Activated B cell treated with CpG ODN at 0.5 μM for 24 hours (primary cell): ENCODE measurements at regions of chr12 and their contacts with region 1.

Region 1: DNA sequence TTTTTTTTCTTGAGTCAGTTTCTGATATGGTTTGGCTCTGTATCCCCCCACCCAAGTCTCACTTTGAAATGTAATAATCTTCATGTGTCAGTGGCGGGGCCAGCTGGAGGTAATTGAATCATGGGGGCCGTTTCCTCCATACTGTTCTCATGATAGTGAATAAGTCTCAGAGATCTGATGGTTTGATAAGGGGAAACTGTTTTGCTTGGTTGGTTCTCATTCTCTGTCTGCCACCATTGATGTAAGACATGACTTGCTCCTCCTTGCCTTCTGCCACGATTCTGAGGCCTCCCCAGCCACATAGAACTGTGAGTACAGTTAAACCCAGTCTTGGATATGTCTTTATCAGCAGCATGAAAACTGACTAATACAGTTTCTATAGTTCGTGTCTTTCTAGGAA is 42.9 kb downstream of the WNK1 start:
- DNase-seq: no peak
- ATAC-seq: peak; percentile 81
- H3K4me3 Mint-ChIP-seq: peak overlapping the region; percentile 55
- H3K27ac Mint-ChIP-seq: peak overlapping the region; percentile 81
- H3K4me1 Mint-ChIP-seq: peaks cover 65% of the 10 kb centered on the region
- H3K27me3 Mint-ChIP-seq: no peaks in the 10 kb centered on the region
- CTCF ChIP-seq: no peak

Region 2: GRCh38 chr12:857611-858010 is 62.3 kb after region 1 on chr12:
- CTCF ChIA-PET with region 1: no interaction called
- POLR2A ChIA-PET with region 1: interaction called, 13 read pairs
- intact Hi-C with region 1: no loop called
- DNase-seq: no peak
- ATAC-seq: no peak
- H3K4me3 Mint-ChIP-seq: no peak overlapping the region
- H3K27ac Mint-ChIP-seq: no peak overlapping the region
- H3K4me1 Mint-ChIP-seq: no peaks in the 10 kb centered on the region
- H3K27me3 Mint-ChIP-seq: no peaks in the 10 kb centered on the region
- CTCF ChIP-seq: no peak

Region 3: DNA sequence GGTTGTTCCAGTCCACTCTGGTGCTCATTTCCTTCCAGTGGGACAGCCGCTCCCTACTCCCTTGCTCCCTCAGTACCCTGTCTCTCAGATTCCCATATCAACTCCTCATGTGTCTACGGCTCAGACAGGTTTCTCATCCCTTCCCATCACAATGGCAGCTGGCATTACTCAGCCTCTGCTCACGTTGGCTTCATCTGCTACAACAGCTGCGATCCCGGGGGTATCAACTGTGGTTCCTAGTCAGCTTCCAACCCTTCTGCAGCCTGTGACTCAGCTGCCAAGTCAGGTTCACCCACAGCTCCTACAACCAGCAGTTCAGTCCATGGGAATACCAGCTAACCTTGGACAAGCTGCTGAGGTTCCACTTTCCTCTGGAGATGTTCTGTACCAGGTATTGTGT is 84.3 kb after region 1 on chr12:
- CTCF ChIA-PET with region 1: no interaction called
- POLR2A ChIA-PET with region 1: no interaction called
- intact Hi-C with region 1: no loop called
- DNase-seq: no peak
- ATAC-seq: no peak
- H3K4me3 Mint-ChIP-seq: no peak overlapping the region
- H3K27ac Mint-ChIP-seq: no peak overlapping the region
- H3K4me1 Mint-ChIP-seq: no peaks in the 10 kb centered on the region
- H3K27me3 Mint-ChIP-seq: no peaks in the 10 kb centered on the region
- CTCF ChIP-seq: no peak